Left cardiac atrium (tissue), 4 donors: ENCODE measurements at regions of chr2 and their contacts with region 1.

Region 1: GRCh38 chr2:134460583-134460998 is 206.7 kb downstream of the MGAT5 start:
- DNase-seq: peak; percentile 60
- ATAC-seq: peak; percentile 77 to 82

Region 2: DNA sequence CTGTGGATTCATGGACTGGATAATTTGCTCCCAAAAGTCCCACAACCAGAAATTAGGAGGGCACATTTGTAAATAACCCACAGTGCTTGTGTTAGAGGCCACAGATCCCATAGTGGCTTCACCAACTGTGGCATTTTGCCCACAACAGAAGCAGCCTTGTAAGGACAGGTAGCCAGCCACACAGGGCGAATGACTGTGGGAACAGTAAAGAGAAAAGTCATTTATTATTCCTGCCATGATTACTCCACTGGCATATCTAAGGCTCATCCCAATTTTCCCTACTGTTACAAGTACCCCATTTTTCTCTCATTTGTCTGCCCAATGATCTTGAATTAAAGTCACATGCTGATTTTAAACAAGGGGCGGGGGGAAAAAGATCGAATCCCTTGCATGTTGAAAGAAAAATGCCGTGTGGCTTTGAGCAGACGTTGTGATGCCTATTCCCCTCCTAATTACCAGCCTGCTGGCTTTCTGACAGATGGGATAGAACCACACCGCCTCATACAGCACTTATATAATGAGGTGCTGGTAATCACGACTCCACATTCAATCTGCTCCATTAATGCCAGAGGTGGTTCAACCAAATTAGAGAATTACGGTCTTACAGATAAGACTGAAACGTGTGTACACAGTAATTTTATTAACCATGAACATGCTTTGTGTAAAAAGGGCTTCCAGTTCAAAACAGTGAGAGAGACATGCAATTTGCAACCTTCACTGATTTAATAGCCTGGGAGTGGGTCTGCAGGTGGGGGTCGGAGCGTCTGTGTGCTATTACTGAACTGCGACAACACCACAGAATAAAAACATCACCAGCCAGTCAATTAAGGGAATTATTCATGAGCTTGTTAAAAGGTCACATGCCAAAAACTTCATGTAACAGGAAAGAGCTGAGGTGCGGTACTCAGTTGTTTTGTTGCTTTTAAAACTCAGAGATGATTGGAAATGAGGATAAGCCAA is 62.2 kb after region 1 on chr2:
- intact Hi-C with region 1: no loop called
- DNase-seq: no peak
- ATAC-seq: no peak

Region 3: GRCh38 chr2:134782792-134783191 is 322.2 kb after region 1 on chr2:
- intact Hi-C with region 1: loop called in 1 of 2 experiments (anchors 10 kb)
- DNase-seq: no peak
- ATAC-seq: peak in 1 of 2 donors; percentile 56